HEK293 (cell line): ENCODE measurements at regions of chr7 and their contacts with region 1.

Region 1: GRCh38 chr7:100586266-100587025 is at the start of gene FBXO24:
- H3K4me3 ChIP-seq: peak within 1 kb of the TSS; percentile 90
- H3K27ac ChIP-seq: peak within 1 kb of the TSS; percentile 73
- H3K4me1 ChIP-seq: peaks cover 12% of the 10 kb centered on the region
- CTCF ChIP-seq: no peak

Region 2: GRCh38 chr7:100469227-100470044 is 117.0 kb before region 1 on chr7:
- CTCF ChIA-PET with region 1: interaction called, 9 read pairs
- POLR2A ChIA-PET with region 1: interaction called, 10 read pairs
- H3K4me3 ChIP-seq: no peak overlapping the region
- H3K27ac ChIP-seq: no peak overlapping the region
- H3K4me1 ChIP-seq: peaks cover 3% of the 10 kb centered on the region; the same call in 1 of the 2 replicates
- CTCF ChIP-seq: peak; percentile 93

Region 3: DNA sequence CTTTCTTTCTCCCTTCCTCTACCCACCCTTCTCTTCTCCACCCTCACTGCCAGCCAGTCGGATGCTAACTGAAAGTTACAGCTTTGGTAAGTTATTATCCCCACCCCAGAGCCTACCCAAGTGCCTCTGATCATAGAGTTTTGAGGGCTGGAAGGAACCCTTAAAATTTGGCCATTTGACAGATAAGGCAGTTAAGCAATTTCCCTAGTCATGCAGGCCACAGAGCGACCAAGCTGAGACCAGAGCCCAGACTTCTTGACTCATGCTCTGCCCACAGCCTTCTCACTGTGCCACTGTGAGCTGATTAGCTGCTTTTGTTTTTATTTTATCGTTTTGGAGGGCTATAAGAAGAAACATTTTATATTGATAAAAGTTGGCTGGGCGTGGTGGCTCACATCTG is 29.9 kb before region 1 on chr7:
- CTCF ChIA-PET with region 1: interaction called, 12 read pairs
- POLR2A ChIA-PET with region 1: interaction called, 4 read pairs
- H3K4me3 ChIP-seq: no peak overlapping the region
- H3K27ac ChIP-seq: no peak overlapping the region
- H3K4me1 ChIP-seq: no peaks in the 10 kb centered on the region
- CTCF ChIP-seq: no peak

Region 4: GRCh38 chr7:100604028-100604975 is 17.9 kb after region 1 on chr7:
- CTCF ChIA-PET with region 1: interaction called, 5 read pairs
- POLR2A ChIA-PET with region 1: interaction called, 91 read pairs
- H3K4me3 ChIP-seq: peak overlapping the region; percentile 48
- H3K27ac ChIP-seq: peak overlapping the region; percentile 55; the same call in 1 of the 2 replicates
- H3K4me1 ChIP-seq: peaks cover 17% of the 10 kb centered on the region
- CTCF ChIP-seq: peak; percentile 97

Region 5: DNA sequence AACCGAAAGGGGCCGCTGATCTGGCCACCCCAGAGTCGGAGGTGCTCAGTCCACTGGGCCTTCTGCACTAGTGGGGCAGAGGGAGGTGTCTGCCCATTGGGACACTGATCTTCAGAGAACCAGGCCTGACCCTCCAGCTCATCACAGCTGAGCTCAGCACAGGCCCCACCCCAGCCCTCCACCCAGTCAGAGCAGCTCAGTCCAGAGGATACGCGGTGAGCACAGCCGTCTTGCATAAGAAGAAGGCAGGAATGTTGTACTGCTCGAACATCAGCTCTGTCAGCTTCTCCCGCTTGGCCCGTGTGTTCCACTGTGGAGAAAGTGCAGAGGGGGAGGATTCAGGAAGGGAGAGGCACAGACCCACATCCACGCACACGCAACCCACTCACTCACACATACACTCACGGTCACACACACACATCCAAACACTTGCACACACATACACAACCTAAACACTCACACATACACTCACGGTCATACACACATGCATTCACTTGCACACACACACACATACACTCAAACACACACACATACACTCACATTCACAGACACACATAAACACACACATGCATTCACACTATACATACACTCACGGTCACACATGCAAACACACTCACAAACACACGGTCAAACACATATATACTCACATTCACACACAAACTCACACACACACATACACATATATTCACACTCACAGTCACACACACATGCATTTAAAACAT is 63.5 kb after region 1 on chr7:
- CTCF ChIA-PET with region 1: no interaction called
- POLR2A ChIA-PET with region 1: interaction called, 10 read pairs
- H3K4me3 ChIP-seq: no peak overlapping the region
- H3K27ac ChIP-seq: no peak overlapping the region
- H3K4me1 ChIP-seq: no peaks in the 10 kb centered on the region
- CTCF ChIP-seq: no peak

Region 6: DNA sequence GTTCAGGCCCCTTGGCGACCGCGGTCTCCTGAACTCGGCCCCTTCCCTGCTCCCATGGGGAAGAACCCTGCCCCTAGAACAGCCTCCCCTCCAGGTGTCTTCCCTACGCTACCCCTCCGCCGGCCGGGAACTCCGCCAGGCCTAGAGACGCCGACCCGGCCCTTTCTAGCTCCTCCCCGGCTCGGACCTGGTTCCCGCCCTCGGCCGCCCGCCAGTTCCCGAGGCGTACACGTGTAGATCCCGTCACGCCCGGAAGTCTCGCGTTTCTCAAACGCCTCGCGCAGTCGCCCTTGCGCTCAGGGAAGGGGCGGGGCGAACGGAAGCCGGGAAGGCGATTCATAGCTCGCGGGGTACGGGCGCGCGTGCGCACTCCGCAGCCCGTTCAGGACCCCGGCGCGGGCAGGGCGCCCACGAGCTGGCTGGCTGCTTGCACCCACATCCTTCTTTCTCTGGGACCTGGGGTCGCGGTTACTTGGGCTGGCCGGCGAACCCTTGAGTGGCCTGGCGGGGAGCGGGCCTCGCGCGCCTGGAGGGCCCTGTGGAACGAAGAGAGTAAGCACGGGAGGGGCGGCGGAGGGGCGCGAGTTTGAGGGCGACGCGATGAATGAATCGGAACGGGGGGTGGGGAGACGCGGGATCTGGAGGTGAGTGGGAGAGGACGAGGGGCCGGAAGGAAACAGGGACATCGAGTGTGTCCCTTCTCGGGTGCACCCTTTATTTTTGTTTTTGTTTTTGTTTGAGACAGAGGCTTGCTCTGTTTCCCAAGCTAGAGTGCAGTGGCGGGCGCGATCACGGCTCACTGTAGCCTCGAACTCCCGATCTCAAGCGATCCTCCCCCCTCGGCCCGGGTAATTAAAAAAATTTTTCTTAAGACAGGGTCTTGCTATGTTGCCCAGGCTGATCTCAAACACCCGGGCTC is 119.6 kb after region 1 on chr7 and contains the start of gene POP7:
- CTCF ChIA-PET with region 1: interaction called, 5 read pairs
- POLR2A ChIA-PET with region 1: interaction called, 35 read pairs
- H3K4me3 ChIP-seq: peak within 1 kb of the TSS; percentile 92
- H3K27ac ChIP-seq: peak within 1 kb of the TSS; percentile 87
- H3K4me1 ChIP-seq: no peaks in the 10 kb centered on the region
- CTCF ChIP-seq: no peak